H1 (cell line): ENCODE measurements at regions of chr9 and their contacts with region 1.

Region 1: GRCh38 chr9:84170521-84171141 is 169.9 kb downstream of the SLC28A3 start:
- DNase-seq: no peak
- H3K4me3 ChIP-seq: no peak overlapping the region
- H3K27ac ChIP-seq: no peak overlapping the region
- H3K4me1 ChIP-seq: no peaks in the 10 kb centered on the region
- H3K27me3 ChIP-seq: no peaks in the 10 kb centered on the region
- CTCF ChIP-seq: no peak
- EP300 ChIP-seq: no peak
- POLR2A ChIP-seq: no peak
- RAD21 ChIP-seq: no peak

Region 2: DNA sequence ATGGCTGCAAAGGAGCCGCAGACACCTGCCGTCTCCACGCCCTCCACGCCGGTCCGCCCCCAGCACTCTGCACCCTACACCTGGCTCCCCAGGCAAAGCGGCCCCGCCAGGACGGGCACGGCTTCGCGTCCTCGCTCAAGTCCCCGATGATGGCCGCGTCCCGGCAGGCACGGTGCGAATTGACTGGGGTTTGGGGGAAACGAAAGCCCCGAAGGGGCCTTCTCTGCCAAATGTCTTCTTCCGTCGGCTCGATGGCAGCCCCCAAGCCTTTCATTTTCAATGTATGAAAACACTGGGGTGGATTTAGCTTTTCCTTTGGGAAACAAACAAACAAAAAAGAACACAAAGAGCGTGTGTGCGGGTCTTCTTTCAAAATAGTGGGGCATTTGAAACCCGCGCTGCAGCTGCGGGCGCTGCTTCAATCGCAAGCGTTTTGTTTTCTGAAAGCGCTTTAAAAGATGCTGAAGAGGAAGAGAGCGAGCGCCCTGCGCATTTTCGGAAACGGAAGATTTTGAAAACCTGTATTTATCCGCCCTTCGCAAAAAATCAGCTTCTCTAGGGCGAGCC is 30.0 kb before region 1 on chr9:
- CTCF ChIA-PET with region 1: interaction called, 10 read pairs
- POLR2A ChIA-PET with region 1: no interaction called
- DNase-seq: peak in 1 of 2 experiments; percentile 76
- H3K4me3 ChIP-seq: peak overlapping the region; percentile 12 to 65 (median 42)
- H3K27ac ChIP-seq: no peak overlapping the region
- H3K4me1 ChIP-seq: peaks cover 0 to 9% (median 2%) of the 10 kb centered on the region in 4 experiments; a peak in 2 of 7 replicates
- H3K27me3 ChIP-seq: peaks cover 0 to 24% (median 12%) of the 10 kb centered on the region in 4 experiments; a peak in 6 of 7 replicates
- CTCF ChIP-seq: no peak
- EP300 ChIP-seq: no peak
- POLR2A ChIP-seq: peak in 1 of 2 experiments; percentile 42; a peak in 1 of 3 replicates
- RAD21 ChIP-seq: no peak

Region 3: GRCh38 chr9:84146893-84147710 is 23.5 kb before region 1 on chr9:
- CTCF ChIA-PET with region 1: interaction called, 16 read pairs
- POLR2A ChIA-PET with region 1: no interaction called
- DNase-seq: no peak
- H3K4me3 ChIP-seq: no peak overlapping the region
- H3K27ac ChIP-seq: no peak overlapping the region
- H3K4me1 ChIP-seq: peaks cover 0 to 6% (median 2%) of the 10 kb centered on the region in 4 experiments; a peak in 5 of 7 replicates
- H3K27me3 ChIP-seq: peaks cover 2 to 32% (median 23%) of the 10 kb centered on the region in 4 experiments
- CTCF ChIP-seq: no peak
- EP300 ChIP-seq: no peak
- POLR2A ChIP-seq: no peak
- RAD21 ChIP-seq: no peak

Region 4: DNA sequence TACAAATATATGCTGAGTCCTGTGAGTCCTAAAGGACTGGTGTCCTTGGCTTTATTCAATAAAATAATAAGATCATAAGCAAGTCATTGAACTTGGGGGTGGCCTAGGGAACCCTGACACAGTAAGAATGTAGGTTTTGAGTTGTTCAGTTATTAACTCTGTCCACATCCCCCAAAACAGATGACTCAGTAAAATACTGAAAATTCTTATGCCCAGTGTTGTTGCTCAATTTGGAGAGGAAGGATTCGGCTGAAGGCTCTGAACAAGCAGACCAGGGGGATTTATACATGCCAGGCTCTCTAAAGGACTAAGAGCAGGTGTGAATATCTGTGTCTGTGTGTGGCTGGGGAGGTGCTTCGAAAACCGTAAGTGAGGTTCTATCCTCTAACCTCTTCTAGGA is 16.3 kb before region 1 on chr9:
- CTCF ChIA-PET with region 1: interaction called, 16 read pairs
- POLR2A ChIA-PET with region 1: no interaction called
- DNase-seq: no peak
- H3K4me3 ChIP-seq: no peak overlapping the region
- H3K27ac ChIP-seq: no peak overlapping the region
- H3K4me1 ChIP-seq: peaks cover 0 to 6% (median 2%) of the 10 kb centered on the region in 4 experiments; a peak in 5 of 7 replicates
- H3K27me3 ChIP-seq: peaks cover 3 to 47% (median 32%) of the 10 kb centered on the region in 4 experiments
- CTCF ChIP-seq: no peak
- EP300 ChIP-seq: no peak
- POLR2A ChIP-seq: no peak
- RAD21 ChIP-seq: no peak

Region 5: GRCh38 chr9:84187090-84187489 is 16.5 kb after region 1 on chr9:
- CTCF ChIA-PET with region 1: interaction called, 52 read pairs
- POLR2A ChIA-PET with region 1: no interaction called
- DNase-seq: no peak
- H3K4me3 ChIP-seq: no peak overlapping the region
- H3K27ac ChIP-seq: no peak overlapping the region
- H3K4me1 ChIP-seq: no peaks in the 10 kb centered on the region
- H3K27me3 ChIP-seq: no peaks in the 10 kb centered on the region
- CTCF ChIP-seq: no peak
- EP300 ChIP-seq: no peak
- POLR2A ChIP-seq: no peak
- RAD21 ChIP-seq: no peak

Region 6: GRCh38 chr9:84238652-84239051 is 68.0 kb after region 1 on chr9:
- CTCF ChIA-PET with region 1: interaction called, 20 read pairs
- POLR2A ChIA-PET with region 1: no interaction called
- DNase-seq: peak in 1 of 2 experiments; percentile 48
- H3K4me3 ChIP-seq: no peak overlapping the region
- H3K27ac ChIP-seq: no peak overlapping the region; the same call in 1 of the 2 replicates
- H3K4me1 ChIP-seq: no peaks in the 10 kb centered on the region
- H3K27me3 ChIP-seq: no peaks in the 10 kb centered on the region
- CTCF ChIP-seq: peak in 2 of 3 experiments; percentile 18 to 66; a peak in 2 of 4 replicates
- EP300 ChIP-seq: no peak
- POLR2A ChIP-seq: no peak
- RAD21 ChIP-seq: 0 out of 4 replicates have a peak, but pooled peaks of 1 of the 2 experiments have one; percentile 14

Region 7: DNA sequence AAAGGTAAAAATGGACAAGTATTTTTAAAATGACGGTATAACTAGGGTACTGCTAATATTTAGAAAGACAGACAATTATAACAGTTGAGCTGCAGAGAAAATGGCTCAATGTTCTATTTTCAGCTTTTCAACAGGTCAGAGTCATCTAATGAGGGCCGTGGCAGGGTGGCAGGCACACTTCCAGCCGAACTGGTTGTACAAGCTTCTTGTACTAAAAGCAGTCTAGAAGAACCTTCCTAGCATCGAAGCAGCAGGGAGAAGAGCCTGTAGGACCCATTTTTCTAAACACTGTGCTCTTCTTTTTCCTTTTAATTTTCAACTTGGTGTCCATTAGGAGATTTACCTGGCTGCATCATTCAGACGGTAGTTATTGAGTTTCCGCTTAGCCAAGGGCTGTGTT is 84.3 kb after region 1 on chr9:
- CTCF ChIA-PET with region 1: interaction called, 18 read pairs
- POLR2A ChIA-PET with region 1: no interaction called
- DNase-seq: no peak
- H3K4me3 ChIP-seq: no peak overlapping the region
- H3K27ac ChIP-seq: no peak overlapping the region
- H3K4me1 ChIP-seq: no peaks in the 10 kb centered on the region; a peak in 2 of 7 replicates
- H3K27me3 ChIP-seq: no peaks in the 10 kb centered on the region
- CTCF ChIP-seq: no peak
- EP300 ChIP-seq: no peak
- POLR2A ChIP-seq: no peak
- RAD21 ChIP-seq: no peak

Region 8: DNA sequence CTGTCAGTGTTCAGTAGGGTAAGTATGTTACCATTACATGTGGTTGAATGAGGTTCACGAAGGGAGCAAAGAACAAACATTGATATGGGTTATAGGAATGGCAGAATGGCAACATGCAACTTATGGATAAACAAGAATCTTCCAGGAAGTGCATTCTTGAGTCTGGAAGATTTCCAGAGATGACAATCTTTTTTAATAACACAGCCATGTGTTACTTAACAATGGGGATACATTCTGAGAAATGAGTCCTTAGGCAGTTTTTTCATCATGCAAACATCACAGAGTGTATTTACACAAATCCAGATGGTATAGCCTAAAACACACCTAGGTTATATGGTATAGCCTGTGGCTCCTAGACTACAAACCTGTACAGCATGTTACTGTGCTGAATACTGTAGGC is 179.1 kb after region 1 on chr9:
- CTCF ChIA-PET with region 1: no interaction called
- POLR2A ChIA-PET with region 1: no interaction called
- DNase-seq: no peak
- H3K4me3 ChIP-seq: no peak overlapping the region
- H3K27ac ChIP-seq: no peak overlapping the region
- H3K4me1 ChIP-seq: no peaks in the 10 kb centered on the region
- H3K27me3 ChIP-seq: no peaks in the 10 kb centered on the region
- CTCF ChIP-seq: no peak
- EP300 ChIP-seq: no peak
- POLR2A ChIP-seq: no peak
- RAD21 ChIP-seq: no peak

Region 9: GRCh38 chr9:84419031-84419602 is 248.5 kb after region 1 on chr9:
- CTCF ChIA-PET with region 1: no interaction called
- POLR2A ChIA-PET with region 1: no interaction called
- DNase-seq: no peak
- H3K4me3 ChIP-seq: no peak overlapping the region
- H3K27ac ChIP-seq: no peak overlapping the region
- H3K4me1 ChIP-seq: no peaks in the 10 kb centered on the region
- H3K27me3 ChIP-seq: no peaks in the 10 kb centered on the region
- CTCF ChIP-seq: peak in 2 of 3 experiments; percentile 52 to 56; a peak in 3 of 4 replicates
- EP300 ChIP-seq: no peak
- POLR2A ChIP-seq: no peak
- RAD21 ChIP-seq: peak; percentile 60 to 70